Activated naive CD4-positive, alpha-beta T cell treated with anti-CD3 and anti-CD28 coated beads for 36 hours (primary cell): ENCODE measurements at regions of chr17 and their contacts with region 1.

Region 1: DNA sequence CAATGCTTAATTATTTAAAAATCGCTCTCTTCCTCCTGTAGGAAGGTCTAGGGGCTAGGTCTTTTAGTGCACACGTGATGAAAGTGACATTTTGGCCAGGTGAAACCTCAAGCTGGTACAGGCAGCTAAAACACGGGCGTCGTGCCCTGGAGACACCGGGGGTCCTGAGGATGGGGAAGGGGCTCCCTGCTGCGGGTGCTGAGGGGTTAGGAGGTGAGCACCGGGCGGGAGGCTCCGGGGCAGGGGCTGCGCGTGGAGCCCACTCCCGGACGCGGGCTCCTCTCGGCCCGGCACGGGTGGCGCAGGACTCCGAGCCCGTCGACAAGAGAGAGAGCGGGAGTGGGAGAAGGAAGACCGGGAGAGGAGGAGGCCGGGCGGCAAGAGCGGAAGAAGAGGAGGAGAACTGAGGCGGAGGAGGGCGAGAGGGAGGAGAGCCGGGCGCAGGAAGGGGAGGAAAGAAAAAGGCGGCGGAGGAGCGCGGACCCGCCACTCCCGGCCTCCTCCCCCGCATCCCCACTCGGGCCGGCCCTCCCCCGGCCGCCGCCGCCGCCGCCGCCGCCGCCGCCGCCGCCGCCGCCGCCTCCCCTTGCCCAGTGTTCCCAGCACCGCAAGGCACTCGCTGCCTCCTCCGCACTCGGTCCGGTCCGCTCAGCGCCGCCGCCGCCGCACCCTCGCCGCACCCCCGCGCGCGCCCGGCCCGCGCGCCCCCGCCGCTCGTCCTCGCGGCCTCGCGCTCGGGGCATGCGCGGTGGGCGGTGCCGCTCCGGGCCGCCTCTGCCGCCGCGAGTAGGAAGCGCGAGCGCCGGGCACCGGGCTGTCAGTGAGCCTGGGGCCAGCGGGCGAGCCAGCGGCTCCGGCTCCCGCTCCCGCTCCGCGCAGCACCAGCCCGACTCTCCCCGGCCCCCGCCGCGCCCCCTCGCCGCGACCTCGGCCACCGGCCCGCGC is at the start of gene PRKCA:
- DNase-seq: peak; percentile 60
- H3K4me3 Mint-ChIP-seq: peak within 1 kb of the TSS; percentile 100
- H3K27ac Mint-ChIP-seq: peak within 1 kb of the TSS; percentile 95
- H3K4me1 Mint-ChIP-seq: peaks cover 28% of the 10 kb centered on the region
- H3K27me3 Mint-ChIP-seq: no peaks in the 10 kb centered on the region
- total RNA-seq, gene PRKCA: 78.4 to 79.7 TPM

Region 2: DNA sequence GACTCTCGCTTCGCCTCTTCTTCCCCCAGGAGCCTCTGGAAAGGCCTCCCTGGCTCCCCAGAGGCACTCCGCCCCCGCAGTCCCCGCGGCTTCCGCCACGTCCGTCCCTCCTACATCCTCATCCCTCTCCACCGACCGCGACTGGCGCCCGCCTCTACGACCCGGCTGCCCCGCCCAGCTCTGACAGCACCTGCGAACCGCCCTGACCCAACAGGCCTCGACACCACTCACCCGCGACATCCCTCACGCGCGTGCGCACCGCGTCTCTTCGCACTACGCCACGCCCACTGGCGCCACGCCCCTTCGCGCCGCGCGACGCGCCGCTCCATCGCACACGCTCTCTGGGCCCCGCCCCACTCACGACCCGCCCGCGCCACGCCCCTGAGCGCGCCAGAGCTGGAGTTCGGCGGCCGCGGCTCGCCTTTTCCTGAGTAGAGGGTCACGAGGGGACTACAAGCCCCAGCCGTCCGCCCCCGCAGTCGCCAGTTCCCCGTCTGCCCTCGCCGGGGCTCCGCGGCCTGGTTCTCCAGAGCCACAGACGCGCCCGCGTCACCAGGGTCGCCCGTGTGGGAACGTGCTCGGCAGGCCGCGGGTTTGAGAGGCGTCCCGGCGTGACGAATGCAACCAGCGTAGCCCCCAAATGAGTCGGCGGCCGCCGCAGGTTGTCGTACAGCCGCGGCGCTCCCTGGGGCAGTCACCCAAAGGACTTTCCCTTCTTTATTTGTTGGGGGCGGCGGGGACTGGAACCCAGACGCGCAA is 1326.6 kb before region 1 on chr17:
- CTCF ChIA-PET with region 1: no interaction called
- intact Hi-C with region 1: loop called (anchors 10 kb)
- DNase-seq: peak; percentile 94
- H3K4me3 Mint-ChIP-seq: peak overlapping the region; percentile 90
- H3K27ac Mint-ChIP-seq: peak overlapping the region; percentile 91
- H3K4me1 Mint-ChIP-seq: peaks cover 45% of the 10 kb centered on the region
- H3K27me3 Mint-ChIP-seq: no peaks in the 10 kb centered on the region

Region 3: DNA sequence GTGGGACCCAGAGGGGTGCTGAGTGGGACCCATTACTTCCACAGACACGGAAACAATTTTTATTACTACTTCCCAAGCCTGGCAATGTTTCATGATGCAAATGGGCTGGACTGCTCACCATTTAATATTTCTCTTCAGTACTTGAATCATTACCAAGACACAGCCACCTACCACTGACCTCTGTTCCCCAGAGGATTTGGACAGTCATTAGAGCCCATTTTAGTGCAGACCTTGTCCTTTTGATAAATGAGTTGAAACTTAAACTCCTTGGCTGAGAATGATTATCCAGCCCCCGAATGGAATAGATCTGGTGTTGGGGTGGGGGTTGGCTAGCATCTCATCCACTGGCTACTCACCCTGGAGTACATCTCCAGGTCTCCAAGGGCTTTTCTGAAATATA is 39.3 kb before region 1 on chr17:
- CTCF ChIA-PET with region 1: no interaction called
- intact Hi-C with region 1: no loop called
- DNase-seq: no peak
- H3K4me3 Mint-ChIP-seq: no peak overlapping the region
- H3K27ac Mint-ChIP-seq: no peak overlapping the region
- H3K4me1 Mint-ChIP-seq: peaks cover 18% of the 10 kb centered on the region
- H3K27me3 Mint-ChIP-seq: no peaks in the 10 kb centered on the region

Region 4: GRCh38 chr17:66383333-66383732 is 81.3 kb after region 1 on chr17:
- CTCF ChIA-PET with region 1: no interaction called
- intact Hi-C with region 1: no loop called
- DNase-seq: no peak
- H3K4me3 Mint-ChIP-seq: no peak overlapping the region
- H3K27ac Mint-ChIP-seq: peak overlapping the region; percentile 33
- H3K4me1 Mint-ChIP-seq: peaks cover 76% of the 10 kb centered on the region
- H3K27me3 Mint-ChIP-seq: no peaks in the 10 kb centered on the region

Region 5: GRCh38 chr17:66426397-66427033 is 124.4 kb after region 1 on chr17:
- CTCF ChIA-PET with region 1: interaction called, 4 read pairs
- intact Hi-C with region 1: loop called (anchors 1 kb)
- DNase-seq: peak; percentile 68
- H3K4me3 Mint-ChIP-seq: no peak overlapping the region
- H3K27ac Mint-ChIP-seq: peak overlapping the region; percentile 83
- H3K4me1 Mint-ChIP-seq: peaks cover 81% of the 10 kb centered on the region
- H3K27me3 Mint-ChIP-seq: no peaks in the 10 kb centered on the region

Region 6: GRCh38 chr17:66567234-66568170 is 265.4 kb after region 1 on chr17:
- CTCF ChIA-PET with region 1: interaction called, 5 read pairs
- intact Hi-C with region 1: loop called (anchors 5 kb)
- DNase-seq: peak; percentile 89
- H3K4me3 Mint-ChIP-seq: no peak overlapping the region
- H3K27ac Mint-ChIP-seq: no peak overlapping the region
- H3K4me1 Mint-ChIP-seq: peaks cover 48% of the 10 kb centered on the region
- H3K27me3 Mint-ChIP-seq: no peaks in the 10 kb centered on the region